ENCODE measurements at regions of chr3 and their contacts with region 1.

Region 1: DNA sequence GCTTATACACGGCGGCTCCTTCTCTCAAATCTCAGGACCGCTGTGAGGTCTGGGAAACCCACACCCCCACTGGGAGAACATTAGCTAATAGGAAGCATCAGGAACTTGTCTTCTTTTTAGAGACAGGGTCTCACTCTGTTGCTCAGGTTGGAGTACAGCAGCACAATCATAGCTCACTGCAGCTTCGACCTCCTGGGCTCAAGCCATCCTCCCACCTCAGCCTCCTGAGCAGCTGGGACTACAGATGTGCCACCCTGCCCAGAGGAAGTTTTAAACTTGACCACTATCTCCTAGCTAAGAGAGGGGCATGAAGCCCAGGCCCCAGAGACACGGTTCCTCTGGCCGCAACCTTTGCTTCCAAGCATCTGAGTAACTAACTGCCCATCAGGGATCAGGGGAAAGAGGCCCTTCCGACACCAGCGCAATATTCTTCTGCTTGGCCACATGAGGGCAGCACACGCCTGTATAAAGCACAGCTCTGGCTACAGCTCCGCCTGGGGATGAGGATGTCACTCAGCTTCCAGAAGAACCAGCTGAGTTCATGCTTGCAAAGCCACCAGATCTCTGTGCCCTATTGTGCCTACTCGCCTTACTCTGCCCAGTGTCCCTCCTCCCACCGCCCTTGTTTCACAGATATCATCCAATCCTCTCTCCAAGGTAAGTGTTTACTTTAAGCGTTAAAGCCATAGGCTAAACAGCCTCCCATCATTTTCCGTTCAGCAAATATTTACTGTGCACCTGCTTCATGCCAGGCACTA is 57.5 kb upstream of the SLC6A11 start:
- DNase-seq: no peak
- ATAC-seq: peak; percentile 76

Region 2: GRCh38 chr3:10855871-10856662 is 97.6 kb after region 1 on chr3:
- intact Hi-C with region 1: no loop called
- DNase-seq: no peak
- ATAC-seq: no peak

Region 3: DNA sequence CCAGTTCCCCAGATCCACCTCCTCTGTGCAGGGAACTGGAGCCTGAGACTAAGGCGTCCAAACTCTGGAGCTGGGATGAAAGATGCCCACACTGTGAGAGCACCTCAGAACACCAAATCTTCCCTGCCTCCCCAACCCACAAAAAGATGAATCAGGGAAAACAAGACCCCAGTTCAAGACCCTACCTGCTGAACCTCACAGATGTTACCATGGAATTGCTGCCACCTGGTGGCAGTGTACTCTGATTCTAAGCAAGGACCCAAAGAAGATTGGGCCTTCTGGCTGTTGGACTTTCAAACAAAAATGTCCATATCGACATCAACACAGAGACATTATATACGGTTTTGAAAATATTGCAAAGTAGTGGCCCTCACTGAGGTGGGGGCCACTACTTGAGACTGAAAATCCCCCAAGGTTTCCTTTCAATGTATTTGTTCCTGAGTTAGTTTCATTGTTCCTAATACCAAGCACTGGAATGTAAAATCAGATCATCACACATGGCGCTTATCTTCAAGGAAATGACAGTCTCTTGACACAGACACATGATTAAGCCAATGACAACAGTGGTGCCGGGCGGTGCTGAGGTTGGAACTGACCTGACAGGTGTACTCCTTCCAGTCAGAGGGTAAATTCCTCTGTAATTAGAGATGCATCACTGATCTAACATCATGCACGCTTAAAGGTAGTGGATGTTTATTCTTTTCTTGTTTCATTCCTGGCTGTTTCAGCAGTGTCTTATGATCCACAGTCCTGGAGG is 125.2 kb after region 1 on chr3:
- intact Hi-C with region 1: loop called (anchors 10 kb)
- DNase-seq: no peak
- ATAC-seq: no peak

Measured in Right ventricle myocardium inferior (tissue), 1 donor.